A673 (cell line): ENCODE measurements at regions of chr5 and their contacts with region 1.

Region 1: DNA sequence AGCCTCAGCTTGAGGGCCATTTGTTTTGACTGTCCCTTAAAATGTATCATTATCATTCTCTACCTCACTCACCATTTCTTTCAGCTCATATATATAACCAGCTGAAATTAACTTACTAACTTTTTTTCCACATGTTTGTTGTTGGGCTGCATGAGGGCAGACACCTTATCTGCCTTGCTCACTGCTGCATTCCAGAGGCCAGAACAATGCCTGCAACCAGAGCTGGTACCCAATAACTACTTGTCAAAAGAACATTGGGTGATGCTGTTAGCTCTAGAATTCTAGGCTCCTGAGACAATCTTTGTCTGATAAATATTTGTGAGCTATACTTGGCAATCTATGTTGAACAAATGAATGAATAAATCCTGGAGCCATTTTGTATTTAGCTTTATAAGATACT is 68.3 kb downstream of the HTR4 start:
- DNase-seq: no peak
- H3K4me3 ChIP-seq: no peak overlapping the region
- H3K27ac ChIP-seq: no peak overlapping the region
- H3K4me1 ChIP-seq: no peaks in the 10 kb centered on the region
- H3K27me3 ChIP-seq: peaks cover 10% of the 10 kb centered on the region
- CTCF ChIP-seq: no peak

Region 2: GRCh38 chr5:148255456-148255855 is 330.5 kb before region 1 on chr5:
- CTCF ChIA-PET with region 1: no interaction called
- POLR2A ChIA-PET with region 1: no interaction called
- intact Hi-C with region 1: no loop called
- DNase-seq: no peak
- H3K4me3 ChIP-seq: no peak overlapping the region
- H3K27ac ChIP-seq: no peak overlapping the region
- H3K4me1 ChIP-seq: no peaks in the 10 kb centered on the region
- H3K27me3 ChIP-seq: no peaks in the 10 kb centered on the region
- CTCF ChIP-seq: no peak

Region 3: DNA sequence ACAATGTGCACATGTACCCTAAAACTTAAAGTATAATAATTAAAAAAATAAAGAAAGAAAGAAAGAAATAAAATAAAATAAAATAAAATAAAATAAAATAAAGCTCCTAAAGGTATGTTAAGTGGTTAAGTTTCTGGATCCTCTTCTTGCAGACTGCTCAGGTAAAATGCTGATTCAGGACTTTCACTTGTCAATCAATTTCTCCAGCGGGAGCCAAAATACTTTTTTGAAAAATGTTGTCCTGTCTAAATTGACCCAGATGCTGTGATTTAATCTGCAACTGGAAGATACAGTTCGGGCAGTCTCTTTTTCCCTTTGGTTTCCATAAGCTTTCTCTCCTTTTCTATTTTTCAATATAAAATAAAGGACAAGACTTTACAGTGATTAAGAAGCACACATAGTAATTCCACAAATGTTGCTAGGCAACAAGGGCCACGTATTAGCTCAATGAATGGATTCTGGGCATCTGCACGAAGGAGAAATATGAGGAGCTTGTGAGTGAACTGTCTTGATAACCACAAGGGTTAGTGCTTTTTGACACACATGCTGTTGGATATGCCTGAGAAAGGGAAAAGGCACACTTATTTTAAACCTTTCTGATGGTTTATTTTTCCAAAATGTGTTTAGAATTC is 29.8 kb after region 1 on chr5:
- CTCF ChIA-PET with region 1: no interaction called
- POLR2A ChIA-PET with region 1: interaction called, 30 read pairs
- intact Hi-C with region 1: no loop called
- DNase-seq: no peak
- H3K4me3 ChIP-seq: no peak overlapping the region
- H3K27ac ChIP-seq: no peak overlapping the region
- H3K4me1 ChIP-seq: no peaks in the 10 kb centered on the region
- H3K27me3 ChIP-seq: peaks cover 20% of the 10 kb centered on the region
- CTCF ChIP-seq: no peak